A673 (cell line): ENCODE measurements at regions of chr15 and their contacts with region 1.

Region 1: DNA sequence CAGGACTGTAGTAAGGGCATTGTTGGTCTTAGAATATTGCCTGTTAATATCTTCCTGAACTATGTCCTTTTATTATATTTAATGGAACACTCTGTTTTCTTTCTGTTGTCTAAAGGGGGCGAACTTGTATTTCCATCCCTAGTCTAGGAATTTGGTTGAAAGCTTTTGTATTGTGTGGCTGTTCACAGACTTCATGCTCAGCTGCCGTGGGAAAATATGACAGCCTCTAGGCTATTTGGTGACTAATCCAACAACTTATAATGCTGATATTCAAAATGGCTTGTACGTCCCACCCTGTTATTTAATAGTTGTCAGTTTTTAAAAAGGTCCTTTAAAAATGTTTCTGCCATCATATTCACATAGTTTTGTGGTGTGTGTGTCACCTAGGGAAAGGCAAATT is 202.6 kb downstream of the KLHL25 start:
- DNase-seq: peak; percentile 67
- H3K4me3 ChIP-seq: no peak overlapping the region
- H3K27ac ChIP-seq: no peak overlapping the region
- H3K4me1 ChIP-seq: no peaks in the 10 kb centered on the region
- H3K27me3 ChIP-seq: no peaks in the 10 kb centered on the region
- CTCF ChIP-seq: peak; percentile 47

Region 2: GRCh38 chr15:85443593-85444087 is 148.5 kb before region 1 on chr15:
- CTCF ChIA-PET with region 1: no interaction called
- POLR2A ChIA-PET with region 1: no interaction called
- intact Hi-C with region 1: no loop called
- DNase-seq: peak; percentile 34
- H3K4me3 ChIP-seq: no peak overlapping the region
- H3K27ac ChIP-seq: no peak overlapping the region
- H3K4me1 ChIP-seq: peaks cover 39% of the 10 kb centered on the region
- H3K27me3 ChIP-seq: no peaks in the 10 kb centered on the region
- CTCF ChIP-seq: no peak

Region 3: GRCh38 chr15:85615930-85616329 is 23.8 kb after region 1 on chr15:
- CTCF ChIA-PET with region 1: no interaction called
- POLR2A ChIA-PET with region 1: no interaction called
- intact Hi-C with region 1: no loop called
- DNase-seq: peak; percentile 63
- H3K4me3 ChIP-seq: no peak overlapping the region
- H3K27ac ChIP-seq: no peak overlapping the region
- H3K4me1 ChIP-seq: peaks cover 41% of the 10 kb centered on the region
- H3K27me3 ChIP-seq: no peaks in the 10 kb centered on the region
- CTCF ChIP-seq: peak; percentile 75

Region 4: GRCh38 chr15:85831415-85832113 is 239.4 kb after region 1 on chr15:
- CTCF ChIA-PET with region 1: no interaction called
- POLR2A ChIA-PET with region 1: no interaction called
- intact Hi-C with region 1: loop called (anchors 5 kb)
- DNase-seq: peak; percentile 69
- H3K4me3 ChIP-seq: no peak overlapping the region
- H3K27ac ChIP-seq: no peak overlapping the region
- H3K4me1 ChIP-seq: no peaks in the 10 kb centered on the region
- H3K27me3 ChIP-seq: no peaks in the 10 kb centered on the region
- CTCF ChIP-seq: peak; percentile 75

Region 5: GRCh38 chr15:85927931-85928537 is 335.9 kb after region 1 on chr15:
- CTCF ChIA-PET with region 1: no interaction called
- POLR2A ChIA-PET with region 1: no interaction called
- intact Hi-C with region 1: no loop called
- DNase-seq: no peak
- H3K4me3 ChIP-seq: no peak overlapping the region
- H3K27ac ChIP-seq: no peak overlapping the region
- H3K4me1 ChIP-seq: no peaks in the 10 kb centered on the region
- H3K27me3 ChIP-seq: peaks cover 20% of the 10 kb centered on the region
- CTCF ChIP-seq: no peak